ENCODE measurements at regions of chr9 and their contacts with region 1.

Region 1: GRCh38 chr9:99184475-99185347 is 37.0 kb downstream of the ALG2 start:
- DNase-seq: peak; percentile 77
- H3K4me3 ChIP-seq: peak overlapping the region in 1 of 2 experiments; percentile 20; a peak in 1 of 4 replicates
- H3K27ac ChIP-seq: peak overlapping the region; percentile 2 to 66; a peak in 3 of 4 replicates
- H3K4me1 ChIP-seq: peaks cover 3 to 29% of the 10 kb centered on the region in 2 experiments; a peak in 1 of 4 replicates
- H3K27me3 ChIP-seq: no peaks in the 10 kb centered on the region
- CTCF ChIP-seq: peak; percentile 94
- EP300 ChIP-seq: no peak
- RAD21 ChIP-seq: peak; percentile 96

Region 2: DNA sequence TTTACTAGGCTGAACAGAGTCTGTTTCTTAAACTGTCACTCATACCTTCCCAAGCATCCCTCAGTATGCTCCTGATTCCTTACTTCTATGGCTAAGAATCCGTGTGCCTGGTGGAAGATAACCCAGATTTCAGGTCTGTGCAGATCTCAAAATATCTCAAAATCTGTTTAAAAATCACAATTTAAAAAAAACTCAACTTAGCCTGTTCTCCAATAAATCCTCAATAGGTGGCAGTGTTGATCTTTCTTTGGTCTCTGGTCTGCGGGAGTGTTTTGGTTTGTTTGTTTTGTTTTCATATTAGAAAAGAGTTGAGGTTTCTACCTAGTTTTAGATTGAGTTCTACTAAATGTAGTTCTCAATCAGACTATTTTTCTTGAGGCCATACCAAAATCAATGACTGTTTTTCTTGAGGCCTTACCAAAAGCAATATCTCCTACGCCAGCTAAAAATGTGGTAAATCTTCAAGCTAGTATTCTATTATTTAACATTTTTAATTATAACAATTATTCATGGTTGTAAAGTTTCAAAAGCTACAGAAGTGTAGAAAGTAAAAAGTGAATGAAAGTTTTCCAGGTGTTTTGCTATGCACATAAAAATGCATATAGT is 21.8 kb before region 1 on chr9:
- CTCF ChIA-PET with region 1: interaction called, 66 read pairs
- POLR2A ChIA-PET with region 1: no interaction called
- DNase-seq: peak; percentile 45
- H3K4me3 ChIP-seq: no peak overlapping the region
- H3K27ac ChIP-seq: no peak overlapping the region
- H3K4me1 ChIP-seq: peaks cover 0 to 6% of the 10 kb centered on the region in 2 experiments; a peak in 2 of 4 replicates
- H3K27me3 ChIP-seq: no peaks in the 10 kb centered on the region
- CTCF ChIP-seq: peak; percentile 81
- EP300 ChIP-seq: no peak
- RAD21 ChIP-seq: peak; percentile 93

Region 3: GRCh38 chr9:99197987-99198386 is 13.3 kb after region 1 on chr9:
- CTCF ChIA-PET with region 1: interaction called, 24 read pairs
- POLR2A ChIA-PET with region 1: no interaction called
- DNase-seq: no peak
- H3K4me3 ChIP-seq: no peak overlapping the region
- H3K27ac ChIP-seq: no peak overlapping the region
- H3K4me1 ChIP-seq: no peaks in the 10 kb centered on the region; a peak in 1 of 4 replicates
- H3K27me3 ChIP-seq: no peaks in the 10 kb centered on the region
- CTCF ChIP-seq: no peak
- EP300 ChIP-seq: no peak
- RAD21 ChIP-seq: no peak

Region 4: GRCh38 chr9:99221621-99222415 is 37.1 kb after region 1 on chr9 and contains the starts of genes ALG2 and SEC61B:
- CTCF ChIA-PET with region 1: interaction called, 33 read pairs
- POLR2A ChIA-PET with region 1: interaction called, 4 read pairs
- DNase-seq: peak; percentile 97
- H3K4me3 ChIP-seq: peak within 1 kb of the TSS; percentile 91 to 99
- H3K27ac ChIP-seq: peak within 1 kb of the TSS; percentile 97 to 99
- H3K4me1 ChIP-seq: peaks cover 11 to 12% of the 10 kb centered on the region in 2 experiments
- H3K27me3 ChIP-seq: no peaks in the 10 kb centered on the region
- CTCF ChIP-seq: no peak
- EP300 ChIP-seq: no peak
- RAD21 ChIP-seq: no peak
- polyA plus RNA-seq, gene ALG2: 31.6 and 35.6 TPM in 2 replicates
- polyA plus RNA-seq, gene SEC61B: 154 and 174 TPM in 2 replicates

Region 5: DNA sequence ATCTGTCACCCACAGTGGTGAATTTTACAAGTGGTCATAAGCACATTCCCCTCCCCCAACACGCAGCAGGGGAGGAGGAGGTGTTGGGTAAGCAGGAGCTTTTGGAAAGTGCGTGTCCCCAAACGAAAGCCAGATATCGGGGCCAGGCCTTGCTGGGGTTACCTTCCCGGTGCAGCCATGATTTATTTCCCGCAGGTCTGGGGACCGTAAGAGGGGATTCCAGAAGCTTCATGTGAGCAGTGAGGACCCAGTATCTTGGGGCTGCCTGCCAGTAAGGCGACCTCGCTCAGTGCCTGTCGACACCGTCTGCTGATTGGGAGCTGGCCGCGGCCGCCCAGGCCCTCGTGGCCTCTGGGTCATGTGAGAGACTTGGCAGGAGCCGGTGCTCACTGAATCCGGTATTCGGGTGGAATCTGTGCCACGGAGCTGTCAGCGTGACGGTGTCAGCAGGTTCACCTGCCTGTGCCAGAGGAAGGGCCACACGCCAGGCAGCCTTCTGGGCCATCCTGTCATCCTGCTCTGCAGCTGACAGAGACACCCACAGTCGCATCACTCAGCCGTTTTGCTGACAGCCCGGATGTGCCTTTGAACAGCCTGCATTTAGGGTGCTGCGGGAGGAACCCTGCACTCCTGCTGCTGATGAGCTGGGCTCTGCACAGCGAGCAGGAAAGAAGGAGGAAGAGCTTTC is 74.7 kb after region 1 on chr9:
- CTCF ChIA-PET with region 1: interaction called, 14 read pairs
- POLR2A ChIA-PET with region 1: no interaction called
- DNase-seq: no peak
- H3K4me3 ChIP-seq: no peak overlapping the region
- H3K27ac ChIP-seq: no peak overlapping the region
- H3K4me1 ChIP-seq: no peaks in the 10 kb centered on the region
- H3K27me3 ChIP-seq: no peaks in the 10 kb centered on the region
- CTCF ChIP-seq: no peak
- EP300 ChIP-seq: no peak
- RAD21 ChIP-seq: no peak

Region 6: DNA sequence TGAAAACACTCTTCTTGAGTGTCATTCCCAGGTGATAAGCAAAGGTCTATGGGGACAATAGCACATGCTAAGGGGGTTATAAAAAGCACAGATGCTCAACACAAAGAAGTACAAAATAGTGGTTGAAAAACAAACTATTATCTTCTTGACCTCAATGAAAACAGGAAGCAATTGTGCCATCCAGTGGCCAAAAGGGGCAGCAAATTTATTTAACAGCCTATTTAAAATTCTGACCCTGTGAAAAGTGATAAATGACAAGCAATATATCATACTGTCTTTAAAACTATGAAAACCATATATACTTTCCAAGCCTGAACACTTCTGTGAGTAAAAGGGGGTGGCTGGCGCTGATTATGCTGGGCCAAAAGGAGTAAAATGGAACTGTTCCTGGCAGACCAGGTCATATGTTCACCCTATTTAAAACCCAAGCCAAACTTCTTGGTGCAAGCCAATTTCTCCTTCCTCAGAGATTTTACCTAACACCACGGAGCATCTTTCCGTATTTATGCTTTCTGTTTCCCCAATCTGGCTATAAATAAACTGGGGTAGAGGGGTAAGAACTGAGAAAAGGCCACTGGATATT is 1138.3 kb after region 1 on chr9:
- CTCF ChIA-PET with region 1: interaction called, 50 read pairs
- POLR2A ChIA-PET with region 1: no interaction called
- DNase-seq: peak; percentile 27
- H3K4me3 ChIP-seq: no peak overlapping the region; a peak in 1 of 4 replicates
- H3K27ac ChIP-seq: no peak overlapping the region
- H3K4me1 ChIP-seq: no peaks in the 10 kb centered on the region
- H3K27me3 ChIP-seq: no peaks in the 10 kb centered on the region
- CTCF ChIP-seq: peak; percentile 87
- EP300 ChIP-seq: no peak
- RAD21 ChIP-seq: peak; percentile 71